Calu3 (cell line): ENCODE measurements at regions of chr9 and their contacts with region 1.

Region 1: GRCh38 chr9:112258108-112258507 is 75.3 kb downstream of the PTBP3 start:
- DNase-seq: no peak
- H3K4me3 Mint-ChIP-seq: no peak overlapping the region
- H3K27ac Mint-ChIP-seq: no peak overlapping the region
- H3K4me1 Mint-ChIP-seq: no peaks in the 10 kb centered on the region
- H3K27me3 Mint-ChIP-seq: no peaks in the 10 kb centered on the region
- CTCF ChIP-seq: no peak

Region 2: DNA sequence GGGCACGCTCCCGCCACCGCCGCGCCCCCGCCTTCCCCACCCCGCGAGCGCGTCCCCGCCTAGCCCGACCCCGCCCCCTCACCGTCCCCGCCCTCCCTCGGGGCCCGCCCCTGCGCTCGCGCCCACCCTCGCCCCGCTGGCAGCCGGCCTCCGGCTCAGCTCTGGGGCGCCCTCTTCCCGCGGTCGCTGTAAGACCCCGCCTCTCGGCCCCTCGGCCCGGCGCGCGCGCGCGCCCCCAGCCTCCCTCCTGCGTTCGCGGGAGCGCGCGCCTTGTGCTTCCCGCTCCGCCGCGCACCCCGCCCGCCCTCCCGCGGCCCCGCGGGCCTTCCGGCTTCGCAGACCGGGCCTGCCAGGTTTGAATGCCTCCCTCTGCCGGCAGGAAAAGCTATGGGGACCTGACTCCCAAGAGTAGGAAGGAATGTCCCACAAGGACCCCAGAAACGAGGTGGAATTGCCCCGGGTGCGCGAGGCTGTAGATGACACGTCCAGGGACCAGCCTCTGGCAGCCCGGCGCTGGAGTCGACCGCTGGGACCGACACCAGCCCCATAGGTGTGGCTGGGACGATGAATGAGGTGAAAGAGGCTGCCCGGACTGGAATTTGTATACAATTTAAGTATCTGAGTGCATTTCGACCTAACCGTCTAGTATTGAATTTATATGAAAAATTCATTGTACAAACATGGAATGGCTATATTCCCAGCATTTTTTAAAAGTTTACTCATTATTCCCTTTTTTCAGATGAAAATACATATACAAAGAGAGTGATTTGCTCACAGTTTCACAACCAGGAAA is 75.7 kb after region 1 on chr9:
- CTCF ChIA-PET with region 1: no interaction called
- intact Hi-C with region 1: loop called (anchors 5 kb)
- DNase-seq: peak; percentile 90
- H3K4me3 Mint-ChIP-seq: peak overlapping the region; percentile 80
- H3K27ac Mint-ChIP-seq: peak overlapping the region; percentile 88
- H3K4me1 Mint-ChIP-seq: peaks cover 22% of the 10 kb centered on the region
- H3K27me3 Mint-ChIP-seq: no peaks in the 10 kb centered on the region
- CTCF ChIP-seq: peak; percentile 20